ENCODE measurements at regions of chr14 and their contacts with region 1.

Region 1: DNA sequence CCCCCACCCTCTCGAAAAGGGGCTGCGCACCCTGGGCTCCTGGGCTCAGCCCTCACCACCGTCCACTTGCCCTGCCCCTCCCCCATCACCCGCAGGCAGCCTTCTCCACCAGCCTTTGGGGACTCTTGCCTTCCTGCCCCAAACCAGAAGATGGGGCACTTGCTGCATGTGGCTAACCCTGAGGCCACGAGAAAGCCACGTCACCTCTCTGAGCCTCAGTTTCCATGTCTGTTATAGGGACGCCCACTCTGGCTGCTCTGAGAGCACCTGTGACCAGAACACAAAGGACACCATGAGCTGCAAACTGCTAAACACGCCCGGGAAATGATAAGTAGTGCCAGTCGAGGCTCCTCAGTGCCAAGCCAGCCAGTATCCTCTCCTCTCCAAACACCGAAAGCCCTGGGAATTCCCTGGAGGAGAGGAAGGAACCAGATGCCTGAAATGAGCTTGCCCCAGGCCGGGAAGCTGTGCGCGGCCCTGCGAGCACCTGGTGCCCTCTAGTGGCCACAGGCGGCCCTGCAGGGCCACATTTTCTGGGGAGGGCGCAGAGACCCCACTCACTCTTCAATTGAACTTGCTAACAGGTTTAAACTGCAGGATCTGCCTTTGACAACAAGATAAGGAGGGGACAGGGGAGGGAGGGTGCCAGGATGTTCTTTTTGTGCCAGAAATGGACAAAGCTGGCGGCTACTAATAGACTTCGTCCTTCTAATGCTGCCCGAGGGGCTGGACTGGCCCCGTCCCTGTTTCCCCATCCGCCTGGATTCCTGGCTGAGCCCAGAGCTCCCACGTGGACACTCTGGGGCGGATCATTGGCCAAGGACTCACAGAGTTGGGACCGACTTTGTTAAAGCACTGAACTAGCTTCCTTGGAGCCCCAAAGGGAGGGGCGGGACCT is 10.2 kb upstream of the SERPINA9 start:
- DNase-seq: peak; percentile 72
- H3K4me3 Mint-ChIP-seq: peak overlapping the region; percentile 6
- H3K27ac Mint-ChIP-seq: no peak overlapping the region
- H3K4me1 Mint-ChIP-seq: no peaks in the 10 kb centered on the region
- H3K27me3 Mint-ChIP-seq: no peaks in the 10 kb centered on the region
- CTCF ChIP-seq: peak; percentile 92

Region 2: DNA sequence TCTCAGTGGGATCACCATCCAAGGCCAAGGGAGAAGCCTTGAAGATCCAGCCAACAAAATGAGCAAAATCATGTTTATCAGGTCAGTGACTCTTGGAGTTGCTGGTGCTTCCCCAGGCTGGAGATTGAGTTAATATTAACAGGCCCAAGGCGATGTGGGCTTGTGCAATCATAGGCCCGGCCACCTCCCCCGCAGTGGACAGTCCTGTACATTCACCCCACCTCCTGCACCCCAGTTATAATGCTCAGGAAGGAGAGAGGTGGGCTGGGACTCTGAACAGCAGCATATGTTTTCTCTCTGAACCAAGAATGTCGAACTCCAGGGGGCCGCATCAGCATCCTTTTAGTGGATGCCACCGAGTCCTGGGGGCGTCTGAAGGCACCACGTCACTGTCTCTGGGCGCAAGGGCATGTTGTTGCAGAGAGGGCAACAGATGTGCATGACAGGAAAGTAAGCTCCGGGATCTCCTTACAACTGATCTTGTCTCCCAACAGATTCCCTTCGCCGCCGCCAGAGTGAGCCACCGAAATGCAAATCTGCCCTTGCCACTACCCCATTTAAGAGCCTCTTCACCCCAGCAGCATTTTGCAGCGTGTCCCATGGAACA is 130.9 kb before region 1 on chr14:
- CTCF ChIA-PET with region 1: interaction called, 3 read pairs
- intact Hi-C with region 1: loop called (anchors 1 kb)
- DNase-seq: peak; percentile 48
- H3K4me3 Mint-ChIP-seq: no peak overlapping the region
- H3K27ac Mint-ChIP-seq: no peak overlapping the region
- H3K4me1 Mint-ChIP-seq: peaks cover 27% of the 10 kb centered on the region
- H3K27me3 Mint-ChIP-seq: no peaks in the 10 kb centered on the region
- CTCF ChIP-seq: no peak

Region 3: DNA sequence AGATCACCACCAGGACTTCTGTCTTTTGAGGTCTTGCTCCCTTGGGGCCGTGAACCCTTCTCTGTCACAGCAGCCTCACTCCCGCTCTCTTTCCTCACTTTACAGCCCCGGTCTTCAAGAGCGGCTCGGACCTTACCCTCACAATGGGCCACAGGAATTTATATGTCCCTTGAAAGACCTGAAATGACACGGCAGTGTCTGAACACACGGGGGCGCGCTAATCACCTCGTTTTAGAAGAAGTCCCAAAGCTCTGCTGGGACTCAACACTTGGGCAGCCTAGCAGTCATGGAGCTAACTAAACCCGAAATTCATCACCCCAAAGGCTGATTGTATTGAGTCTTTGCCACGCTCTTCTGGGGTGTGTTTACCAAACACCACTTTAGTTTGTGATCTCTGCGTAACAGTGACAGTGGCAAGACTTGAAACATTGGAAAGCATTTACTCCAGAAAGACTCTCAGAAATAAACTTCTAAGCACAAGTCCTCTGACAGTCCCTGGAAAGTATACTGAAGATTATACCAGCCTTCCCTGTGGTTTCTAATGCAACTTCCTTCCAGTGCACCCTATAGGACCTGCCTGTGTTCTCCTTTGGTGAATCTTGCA is 62.6 kb before region 1 on chr14:
- CTCF ChIA-PET with region 1: interaction called, 13 read pairs
- intact Hi-C with region 1: no loop called
- DNase-seq: peak; percentile 81
- H3K4me3 Mint-ChIP-seq: peak overlapping the region; percentile 32
- H3K27ac Mint-ChIP-seq: no peak overlapping the region
- H3K4me1 Mint-ChIP-seq: peaks cover 8% of the 10 kb centered on the region
- H3K27me3 Mint-ChIP-seq: no peaks in the 10 kb centered on the region
- CTCF ChIP-seq: peak; percentile 56

Region 4: GRCh38 chr14:94428610-94429009 is 57.6 kb before region 1 on chr14:
- CTCF ChIA-PET with region 1: interaction called, 48 read pairs
- intact Hi-C with region 1: no loop called
- DNase-seq: no peak
- H3K4me3 Mint-ChIP-seq: no peak overlapping the region
- H3K27ac Mint-ChIP-seq: no peak overlapping the region
- H3K4me1 Mint-ChIP-seq: peaks cover 1% of the 10 kb centered on the region
- H3K27me3 Mint-ChIP-seq: peaks cover 24% of the 10 kb centered on the region
- CTCF ChIP-seq: no peak

Region 5: DNA sequence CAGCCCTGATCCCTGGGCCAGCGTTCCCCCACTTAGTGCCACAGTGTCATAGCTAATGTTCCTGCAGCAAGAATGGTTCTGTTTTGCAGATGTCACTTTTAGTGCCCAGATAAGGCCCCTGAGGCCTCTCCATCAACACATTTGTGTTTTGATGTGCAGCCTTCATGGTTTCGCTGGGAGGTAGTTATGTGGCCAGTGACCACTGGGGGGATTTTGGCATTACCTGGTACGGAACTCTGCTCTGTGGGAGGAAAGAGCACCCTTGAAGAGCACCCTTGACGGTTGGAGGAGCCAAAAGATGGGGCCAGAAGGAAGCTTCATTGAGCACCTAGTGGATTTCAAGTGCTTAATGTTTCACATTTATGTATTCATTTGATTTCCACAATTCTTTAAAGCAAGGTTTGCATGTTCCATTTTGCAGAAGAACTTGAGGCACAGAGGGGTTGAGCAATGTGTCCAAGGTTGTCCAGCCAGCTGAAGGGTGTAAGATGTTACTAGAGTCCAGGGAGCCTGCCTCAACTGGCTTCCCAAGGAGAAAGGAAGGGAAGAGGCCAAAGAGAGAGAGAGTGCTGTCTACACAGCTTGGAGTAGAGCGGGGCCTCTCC is 46.6 kb before region 1 on chr14:
- CTCF ChIA-PET with region 1: interaction called, 6 read pairs
- intact Hi-C with region 1: loop called (anchors 2 kb)
- DNase-seq: no peak
- H3K4me3 Mint-ChIP-seq: no peak overlapping the region
- H3K27ac Mint-ChIP-seq: no peak overlapping the region
- H3K4me1 Mint-ChIP-seq: no peaks in the 10 kb centered on the region
- H3K27me3 Mint-ChIP-seq: peaks cover 57% of the 10 kb centered on the region
- CTCF ChIP-seq: no peak

Region 6: DNA sequence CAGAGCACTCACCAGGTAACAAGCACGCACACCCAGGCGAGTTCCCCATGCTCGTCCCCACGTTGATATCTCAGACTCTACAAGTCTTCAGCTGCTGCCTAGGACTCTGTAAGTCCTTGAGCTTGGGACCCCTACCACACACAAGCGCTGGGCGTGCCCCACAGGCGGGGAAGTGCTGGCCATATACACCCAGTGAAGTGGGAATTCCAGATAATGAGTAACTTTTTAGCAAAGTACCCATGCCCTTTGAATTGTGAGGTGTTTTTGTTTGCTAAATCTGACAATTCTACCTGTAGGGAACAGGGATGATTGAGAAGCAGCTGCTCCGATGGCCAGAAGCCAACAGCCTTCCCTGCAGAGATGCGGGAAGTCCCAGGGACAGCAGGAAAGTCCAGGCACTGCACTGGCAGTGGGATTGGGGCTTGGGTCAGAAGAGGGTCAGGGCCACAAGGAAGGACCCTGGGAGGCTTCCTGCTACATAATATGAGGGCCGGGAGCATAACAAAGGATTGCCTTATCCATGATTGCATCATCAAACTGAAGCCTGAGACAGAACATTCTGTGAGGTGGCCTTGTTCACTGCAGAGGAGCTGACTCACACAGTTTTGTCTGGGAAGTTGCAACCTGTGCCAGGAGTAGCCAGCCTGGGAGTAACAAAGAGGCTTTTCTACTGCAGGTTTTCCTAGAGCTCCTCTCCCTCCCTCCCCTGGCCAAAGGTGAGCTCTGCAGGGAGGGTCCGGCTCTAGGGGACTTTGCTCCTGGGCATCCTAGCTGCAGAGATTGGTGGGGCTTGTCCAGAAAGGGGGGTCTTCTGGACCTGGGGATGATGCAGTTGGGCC is 112.8 kb after region 1 on chr14:
- CTCF ChIA-PET with region 1: interaction called, 13 read pairs
- intact Hi-C with region 1: no loop called
- DNase-seq: peak; percentile 91
- H3K4me3 Mint-ChIP-seq: peak overlapping the region; percentile 46
- H3K27ac Mint-ChIP-seq: peak overlapping the region; percentile 95
- H3K4me1 Mint-ChIP-seq: peaks cover 81% of the 10 kb centered on the region
- H3K27me3 Mint-ChIP-seq: no peaks in the 10 kb centered on the region
- CTCF ChIP-seq: peak; percentile 38

Measured in Calu3 (cell line).